ENCODE measurements at regions of chr1 and their contacts with region 1.

Region 1: DNA sequence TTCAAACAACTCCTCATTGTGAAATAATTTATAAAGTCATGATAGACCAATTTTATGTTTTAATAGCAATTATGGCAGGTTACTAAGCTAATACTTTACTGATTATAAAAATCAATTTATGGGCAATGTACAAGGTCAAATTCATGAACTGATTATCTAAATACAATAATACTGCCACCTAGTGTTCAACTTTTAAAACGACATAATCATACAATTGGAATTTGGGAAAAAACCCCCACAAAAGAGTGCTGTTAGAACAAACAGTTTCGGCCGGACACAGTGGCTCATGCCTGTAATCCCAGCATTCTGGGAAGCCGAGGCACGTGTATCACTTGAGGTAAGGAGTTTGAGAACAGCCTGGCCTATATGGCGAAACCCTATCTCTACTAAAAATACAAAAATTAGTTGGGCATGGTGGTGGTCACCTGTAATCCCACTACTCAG is 14.0 kb downstream of the GTF2B start:
- DNase-seq: no peak

Region 2: GRCh38 chr1:88655685-88656299 is 221.6 kb before region 1 on chr1:
- intact Hi-C with region 1: loop called (anchors 5 kb)
- DNase-seq: no peak

Measured in head of caudate nucleus (tissue), 42 donors.